ENCODE measurements at regions of chr22 and their contacts with region 1.

Region 1: DNA sequence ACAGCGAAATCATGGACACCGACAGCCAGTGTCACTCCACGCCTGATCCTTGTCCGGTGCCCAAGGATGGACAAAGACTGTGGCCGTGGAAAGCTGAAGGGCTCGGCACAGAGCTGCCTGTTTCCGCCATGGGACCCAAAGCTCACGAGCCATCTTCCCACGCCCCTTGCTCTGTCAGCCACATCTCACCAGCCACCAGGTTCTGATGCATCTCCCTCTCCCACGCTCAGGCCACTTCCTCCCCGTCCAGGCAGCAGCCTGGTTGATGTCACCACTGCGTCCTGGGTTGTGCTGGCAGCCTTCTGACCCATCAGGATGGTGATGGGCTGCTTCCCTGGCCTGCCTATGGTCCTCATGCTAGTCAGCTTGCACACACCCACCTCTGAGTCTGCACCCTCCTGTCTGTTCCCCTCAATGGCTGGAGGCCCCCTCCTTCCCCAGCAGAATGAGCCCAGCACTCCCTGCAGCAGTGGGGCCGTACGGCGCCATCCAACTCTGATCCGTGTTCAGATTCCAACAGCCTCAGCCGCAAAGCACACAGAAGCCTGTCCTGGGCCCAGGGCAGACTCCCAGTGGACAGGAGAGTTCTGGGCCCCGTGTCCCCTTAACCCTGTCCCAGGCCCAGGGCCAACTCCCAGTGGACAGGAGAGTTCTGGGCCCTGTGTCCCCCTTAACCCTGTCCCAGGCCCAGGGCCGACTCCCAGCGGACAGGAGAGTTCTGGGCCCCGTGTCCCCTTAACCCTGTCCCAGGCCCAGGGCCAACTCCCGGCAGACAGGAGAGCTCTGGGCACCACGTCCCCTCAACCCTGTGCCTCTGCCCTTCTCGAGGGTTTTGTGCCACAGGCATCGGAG is 259.5 kb downstream of the BRD1 start:
- DNase-seq: peak; percentile 45
- H3K4me3 ChIP-seq: no peak overlapping the region
- H3K27ac ChIP-seq: peak overlapping the region in 6 of 8 donors; percentile 3 to 77 (median 64)
- H3K4me1 ChIP-seq: peaks cover 0 to 30% (median 12%) of the 10 kb centered on the region in 6 donors
- H3K27me3 ChIP-seq: no peaks in the 10 kb centered on the region
- CTCF ChIP-seq: no peak
- POLR2A ChIP-seq: no peak

Region 2: GRCh38 chr22:49372530-49373288 is 195.4 kb before region 1 on chr22:
- intact Hi-C with region 1: loop called (anchors 5 kb)
- DNase-seq: peak; percentile 69
- H3K4me3 ChIP-seq: no peak overlapping the region
- H3K27ac ChIP-seq: no peak overlapping the region
- H3K4me1 ChIP-seq: peaks cover 0 to 15% (median 5%) of the 10 kb centered on the region in 6 donors
- H3K27me3 ChIP-seq: peaks cover 0 to 60% (median 0%) of the 10 kb centered on the region in 7 donors
- CTCF ChIP-seq: no peak
- POLR2A ChIP-seq: no peak

Region 3: GRCh38 chr22:49462795-49463194 is 105.3 kb before region 1 on chr22:
- intact Hi-C with region 1: no loop called
- DNase-seq: no peak
- H3K4me3 ChIP-seq: no peak overlapping the region
- H3K27ac ChIP-seq: no peak overlapping the region
- H3K4me1 ChIP-seq: no peaks in the 10 kb centered on the region
- H3K27me3 ChIP-seq: peaks cover 0 to 13% (median 0%) of the 10 kb centered on the region in 7 donors
- CTCF ChIP-seq: no peak
- POLR2A ChIP-seq: no peak

Region 4: DNA sequence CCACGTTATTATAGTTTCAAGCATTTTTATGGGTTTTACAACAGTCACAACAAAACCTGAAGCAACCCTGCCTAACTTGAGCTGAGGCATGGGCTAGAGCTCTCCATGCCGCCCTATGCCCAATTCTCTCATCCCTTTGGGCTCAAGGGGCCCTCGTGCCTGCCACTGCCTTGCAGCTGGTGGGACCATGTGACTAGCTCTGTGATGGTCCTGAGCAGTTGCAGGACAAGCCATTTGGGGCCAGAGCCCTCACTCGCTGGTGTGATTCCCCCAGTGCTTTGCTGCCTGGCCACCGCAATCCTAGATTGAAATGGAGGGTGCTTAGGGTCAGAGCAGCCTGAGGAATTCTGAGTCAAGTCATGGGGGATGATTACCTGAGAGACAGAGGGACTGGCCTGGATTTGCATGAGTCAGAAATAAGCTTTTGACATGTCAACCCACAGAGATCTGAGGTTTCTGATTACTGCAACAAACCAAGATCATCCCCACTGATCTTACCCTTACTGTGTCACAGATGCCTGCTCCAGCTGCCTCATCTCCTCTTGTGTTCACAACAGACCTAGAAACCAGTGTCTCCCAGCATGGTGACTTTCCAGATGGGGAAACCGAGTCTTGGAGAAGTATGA is 64.1 kb before region 1 on chr22:
- intact Hi-C with region 1: no loop called
- DNase-seq: no peak
- H3K4me3 ChIP-seq: no peak overlapping the region
- H3K27ac ChIP-seq: no peak overlapping the region
- H3K4me1 ChIP-seq: no peaks in the 10 kb centered on the region
- H3K27me3 ChIP-seq: no peaks in the 10 kb centered on the region
- CTCF ChIP-seq: no peak
- POLR2A ChIP-seq: no peak